ENCODE measurements at regions of chr3 and their contacts with region 1.

Region 1: DNA sequence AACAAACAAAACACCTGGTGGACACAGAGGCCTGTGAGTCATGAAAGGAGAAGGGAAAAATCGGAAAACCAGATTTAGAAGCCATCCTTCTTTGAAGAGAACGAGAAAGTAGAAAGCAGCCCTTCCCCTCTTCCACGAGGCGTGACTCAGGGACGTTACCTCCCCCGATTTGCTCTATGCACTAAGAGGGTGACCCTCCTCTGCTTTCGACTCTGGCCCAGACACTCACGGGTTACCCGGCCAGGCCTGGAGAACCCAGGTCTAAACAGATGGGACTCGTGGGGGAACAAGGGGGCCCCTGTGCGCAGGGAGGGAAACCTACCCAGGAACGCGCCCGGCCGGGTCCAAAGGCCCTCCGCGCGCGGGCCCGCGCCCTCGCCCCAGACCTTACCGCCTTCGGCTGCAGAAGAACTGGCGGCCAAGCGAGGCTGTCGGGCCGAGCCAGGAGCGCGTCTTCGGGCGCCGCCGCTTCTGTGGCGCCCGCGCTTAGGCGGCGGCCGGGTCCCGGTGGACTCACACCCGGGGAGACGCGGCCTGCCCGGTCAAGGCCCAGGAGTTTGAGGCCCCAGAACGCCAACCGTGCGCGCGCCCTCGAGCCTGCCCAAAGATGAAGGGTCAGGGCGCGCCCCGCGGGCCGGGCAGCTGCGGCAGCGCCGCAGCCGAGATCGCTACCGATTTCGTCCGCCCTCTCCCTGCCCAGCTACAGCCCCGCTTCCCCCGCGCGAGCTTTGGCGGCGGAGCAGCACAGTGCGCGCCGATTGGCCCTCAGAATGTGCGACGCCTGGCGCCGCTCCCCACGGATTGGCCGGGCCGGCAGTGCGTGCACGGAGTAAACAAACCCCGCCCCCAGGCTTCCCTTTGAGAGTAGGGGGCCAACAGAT is at the start of gene TFDP2:
- DNase-seq: peak; percentile 88
- H3K4me3 Mint-ChIP-seq: peak within 1 kb of the TSS; percentile 90
- H3K27ac Mint-ChIP-seq: peak within 1 kb of the TSS; percentile 80
- H3K4me1 Mint-ChIP-seq: peaks cover 18% of the 10 kb centered on the region
- H3K27me3 Mint-ChIP-seq: peaks cover 4% of the 10 kb centered on the region
- total RNA-seq, gene TFDP2: 19.7 and 27.5 TPM in 2 replicates

Region 2: DNA sequence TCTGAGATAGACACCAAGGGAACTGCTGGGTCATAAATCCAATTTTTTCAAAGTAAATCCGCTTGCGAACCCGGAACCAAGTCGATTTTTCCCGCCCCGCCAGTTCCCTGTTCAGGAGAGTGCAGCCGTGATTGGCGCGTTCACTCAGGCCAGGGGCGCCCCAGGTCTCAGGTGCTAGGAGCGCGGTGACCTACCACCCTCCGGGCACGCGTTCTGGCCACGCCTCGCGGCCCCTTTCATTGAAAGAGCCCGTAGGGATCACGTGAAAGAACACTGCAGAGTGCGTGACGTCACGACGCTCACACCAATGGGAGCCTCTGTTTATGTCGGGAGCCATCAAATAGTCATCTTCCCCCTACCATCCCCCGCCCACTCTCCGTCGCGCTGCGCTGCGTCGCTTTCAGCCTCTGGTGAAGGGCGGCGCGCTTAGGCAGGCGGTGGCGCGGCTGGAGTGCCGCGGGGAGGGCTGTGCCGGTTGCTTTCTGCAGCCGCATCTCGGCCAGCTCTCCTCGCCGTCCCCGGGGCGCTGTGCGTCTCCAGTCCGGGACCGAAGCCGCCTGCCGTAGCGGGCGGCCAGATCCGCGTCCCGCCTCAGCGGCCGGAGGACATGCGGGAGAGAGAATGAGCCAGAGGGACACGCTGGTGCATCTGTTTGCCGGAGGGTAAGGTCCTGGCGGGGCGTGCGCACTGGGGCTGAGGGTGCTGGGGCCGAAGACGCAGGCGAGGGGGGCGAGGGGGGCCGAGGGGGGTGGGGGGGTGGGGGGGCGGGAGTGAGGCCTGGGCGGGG is 1207.4 kb before region 1 on chr3 and contains the start of gene SLC25A36:
- intact Hi-C with region 1: loop called (anchors 5 kb)
- DNase-seq: peak; percentile 95
- H3K4me3 Mint-ChIP-seq: peak within 1 kb of the TSS; percentile 92
- H3K27ac Mint-ChIP-seq: peak within 1 kb of the TSS; percentile 95
- H3K4me1 Mint-ChIP-seq: peaks cover 36% of the 10 kb centered on the region
- H3K27me3 Mint-ChIP-seq: peaks cover 12% of the 10 kb centered on the region
- total RNA-seq, gene SLC25A36: 49.5 and 52.3 TPM in 2 replicates

Region 3: GRCh38 chr3:142065344-142065743 is 83.7 kb before region 1 on chr3:
- intact Hi-C with region 1: no loop called
- DNase-seq: no peak
- H3K4me3 Mint-ChIP-seq: no peak overlapping the region
- H3K27ac Mint-ChIP-seq: no peak overlapping the region
- H3K4me1 Mint-ChIP-seq: no peaks in the 10 kb centered on the region
- H3K27me3 Mint-ChIP-seq: peaks cover 2% of the 10 kb centered on the region

Region 4: GRCh38 chr3:142129516-142130171 is 19.4 kb before region 1 on chr3:
- intact Hi-C with region 1: loop called (anchors 2 kb)
- DNase-seq: no peak
- H3K4me3 Mint-ChIP-seq: no peak overlapping the region
- H3K27ac Mint-ChIP-seq: no peak overlapping the region
- H3K4me1 Mint-ChIP-seq: no peaks in the 10 kb centered on the region
- H3K27me3 Mint-ChIP-seq: no peaks in the 10 kb centered on the region

Region 5: GRCh38 chr3:142270407-142270806 is 121.4 kb after region 1 on chr3:
- intact Hi-C with region 1: loop called (anchors 1 kb)
- DNase-seq: peak; percentile 49
- H3K4me3 Mint-ChIP-seq: peak overlapping the region; percentile 11
- H3K27ac Mint-ChIP-seq: peak overlapping the region; percentile 65
- H3K4me1 Mint-ChIP-seq: peaks cover 20% of the 10 kb centered on the region
- H3K27me3 Mint-ChIP-seq: no peaks in the 10 kb centered on the region

Region 6: GRCh38 chr3:142578327-142579223 is 429.5 kb after region 1 on chr3 and contains the start of gene ATR:
- intact Hi-C with region 1: loop called (anchors 5 kb)
- DNase-seq: peak; percentile 96
- H3K4me3 Mint-ChIP-seq: peak within 1 kb of the TSS; percentile 100
- H3K27ac Mint-ChIP-seq: peak within 1 kb of the TSS; percentile 100
- H3K4me1 Mint-ChIP-seq: peaks cover 46% of the 10 kb centered on the region
- H3K27me3 Mint-ChIP-seq: peaks cover 10% of the 10 kb centered on the region
- total RNA-seq, gene ATR: 27.0 and 35.5 TPM in 2 replicates

Region 7: GRCh38 chr3:144028798-144029411 is 1879.9 kb after region 1 on chr3:
- intact Hi-C with region 1: no loop called
- DNase-seq: no peak
- H3K4me3 Mint-ChIP-seq: no peak overlapping the region
- H3K27ac Mint-ChIP-seq: no peak overlapping the region
- H3K4me1 Mint-ChIP-seq: peaks cover 12% of the 10 kb centered on the region
- H3K27me3 Mint-ChIP-seq: peaks cover 9% of the 10 kb centered on the region

Measured in activated T-helper 1 cell treated with anti-CD3 and anti-CD28 coated beads, Interleukin-12 subunit alpha, Interleukin-12 subunit beta, Interleukin-2, Interleukin-4 antibody, amounts not matched to agents 30 ng/mL and 10 ng/mL and 1 ng/mL, durations not matched to agents 14 hours and 24 hours and 36 hours (primary cell).